ENCODE measurements at regions of chr20 and their contacts with region 1.

Region 1: DNA sequence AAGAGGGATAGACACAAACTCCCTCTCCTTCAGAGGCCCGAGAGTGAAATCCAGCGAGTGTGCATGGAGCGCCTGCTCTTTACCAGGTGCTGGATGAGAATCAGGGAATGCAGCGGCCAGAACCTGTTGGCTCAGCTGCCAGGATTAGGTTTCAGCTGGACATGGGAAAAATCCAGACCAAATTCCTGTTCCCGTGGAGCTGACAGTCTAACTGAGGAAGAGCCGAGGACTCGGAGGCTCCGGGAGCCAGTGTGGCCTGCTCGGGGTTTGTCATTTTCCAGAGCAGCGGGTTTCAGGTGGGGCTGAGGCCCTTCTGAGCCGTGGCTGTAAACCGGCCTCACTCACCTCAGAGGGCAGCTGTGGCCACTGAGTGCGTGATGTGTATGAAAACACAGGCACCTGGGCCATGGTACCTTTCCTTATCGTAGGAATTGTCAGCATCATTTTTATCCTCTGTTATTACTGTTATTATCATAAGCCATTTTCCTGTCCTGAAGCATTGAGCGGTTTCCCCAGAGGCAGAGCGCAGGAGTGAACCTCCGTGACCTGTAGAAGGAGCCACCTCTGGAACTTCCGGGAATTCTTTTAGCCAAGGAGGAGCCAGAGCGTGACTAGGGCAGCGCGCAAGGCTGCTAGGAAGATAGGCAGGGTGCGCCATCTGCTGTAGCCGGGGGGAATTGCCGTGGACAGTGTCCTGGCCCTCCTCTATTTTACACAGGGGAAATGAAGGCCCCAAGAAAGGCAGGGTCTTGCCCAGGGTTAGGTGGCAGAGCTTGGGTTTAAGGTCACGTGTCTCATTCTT is 27.3 kb downstream of the PKIG start:
- DNase-seq: peak; percentile 94
- ATAC-seq: peak; percentile 97
- H3K4me3 ChIP-seq: no peak overlapping the region
- H3K27ac ChIP-seq: peak overlapping the region; percentile 65
- H3K4me1 ChIP-seq: peaks cover 8% of the 10 kb centered on the region
- H3K27me3 ChIP-seq: no peaks in the 10 kb centered on the region
- CTCF ChIP-seq: peak; percentile 98

Region 2: GRCh38 chr20:44217342-44218092 is 392.2 kb before region 1 on chr20:
- CTCF ChIA-PET with region 1: no interaction called
- POLR2A ChIA-PET with region 1: no interaction called
- intact Hi-C with region 1: loop called (anchors 2 kb)
- DNase-seq: peak; percentile 91
- ATAC-seq: peak; percentile 73
- H3K4me3 ChIP-seq: no peak overlapping the region
- H3K27ac ChIP-seq: no peak overlapping the region
- H3K4me1 ChIP-seq: peaks cover 14% of the 10 kb centered on the region; the same call in 1 of the 2 replicates
- H3K27me3 ChIP-seq: no peaks in the 10 kb centered on the region
- CTCF ChIP-seq: peak; percentile 99

Region 3: GRCh38 chr20:44475694-44476560 is 133.8 kb before region 1 on chr20 and contains the start of gene TTPAL:
- CTCF ChIA-PET with region 1: interaction called, 4 read pairs
- POLR2A ChIA-PET with region 1: no interaction called
- intact Hi-C with region 1: loop called (anchors 1 kb)
- DNase-seq: peak; percentile 97
- ATAC-seq: peak; percentile 92
- H3K4me3 ChIP-seq: peak within 1 kb of the TSS; percentile 77
- H3K27ac ChIP-seq: peak within 1 kb of the TSS; percentile 48
- H3K4me1 ChIP-seq: peaks cover 20% of the 10 kb centered on the region
- H3K27me3 ChIP-seq: no peaks in the 10 kb centered on the region
- CTCF ChIP-seq: peak; percentile 41; the same call in 1 of the 2 replicates
- total RNA-seq, gene TTPAL: 14.0 and 17.9 TPM in 2 replicates

Region 4: DNA sequence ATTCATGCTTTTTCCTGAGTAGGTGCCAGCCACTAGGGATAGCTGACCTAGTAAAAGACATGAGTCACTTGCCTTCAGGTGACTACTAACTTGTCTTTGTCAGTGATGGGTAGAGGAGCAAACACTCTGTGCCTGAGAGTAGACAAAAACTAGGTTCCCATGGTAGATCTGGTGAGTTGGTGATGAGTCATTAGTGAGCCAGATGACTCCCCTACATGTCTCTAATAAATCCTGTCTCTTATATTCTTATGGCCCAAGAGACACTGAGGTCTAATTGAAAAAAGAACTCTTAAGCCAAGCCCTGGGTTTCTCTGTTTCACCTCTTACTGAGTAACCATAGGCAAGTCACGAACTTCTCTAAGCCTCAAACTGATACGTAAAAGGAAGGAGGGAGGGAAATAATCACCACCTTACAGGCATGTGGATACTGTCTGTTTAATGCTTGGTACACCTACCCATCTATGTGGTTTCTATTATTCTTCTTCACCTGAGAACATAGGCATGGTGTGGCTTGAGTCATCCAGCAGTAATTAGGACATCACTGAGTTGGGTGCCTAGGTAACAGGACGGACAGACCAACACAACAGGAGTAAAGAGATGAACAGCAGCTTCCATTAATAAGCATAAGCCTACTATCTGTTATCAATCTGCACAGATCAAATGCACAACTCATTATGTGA is 113.8 kb before region 1 on chr20:
- CTCF ChIA-PET with region 1: no interaction called
- POLR2A ChIA-PET with region 1: no interaction called
- intact Hi-C with region 1: loop called (anchors 1 kb)
- DNase-seq: peak; percentile 99
- ATAC-seq: peak; percentile 82
- H3K4me3 ChIP-seq: peak overlapping the region; percentile 20; the same call in 1 of the 2 replicates
- H3K27ac ChIP-seq: peak overlapping the region; percentile 96
- H3K4me1 ChIP-seq: peaks cover 50% of the 10 kb centered on the region
- H3K27me3 ChIP-seq: no peaks in the 10 kb centered on the region
- CTCF ChIP-seq: no peak

Region 5: GRCh38 chr20:44532259-44532980 is 77.3 kb before region 1 on chr20:
- CTCF ChIA-PET with region 1: no interaction called
- POLR2A ChIA-PET with region 1: no interaction called
- intact Hi-C with region 1: loop called (anchors 2 kb)
- DNase-seq: peak; percentile 25
- ATAC-seq: peak; percentile 14
- H3K4me3 ChIP-seq: peak overlapping the region; percentile 75
- H3K27ac ChIP-seq: peak overlapping the region; percentile 41
- H3K4me1 ChIP-seq: peaks cover 27% of the 10 kb centered on the region
- H3K27me3 ChIP-seq: no peaks in the 10 kb centered on the region
- CTCF ChIP-seq: no peak

Region 6: DNA sequence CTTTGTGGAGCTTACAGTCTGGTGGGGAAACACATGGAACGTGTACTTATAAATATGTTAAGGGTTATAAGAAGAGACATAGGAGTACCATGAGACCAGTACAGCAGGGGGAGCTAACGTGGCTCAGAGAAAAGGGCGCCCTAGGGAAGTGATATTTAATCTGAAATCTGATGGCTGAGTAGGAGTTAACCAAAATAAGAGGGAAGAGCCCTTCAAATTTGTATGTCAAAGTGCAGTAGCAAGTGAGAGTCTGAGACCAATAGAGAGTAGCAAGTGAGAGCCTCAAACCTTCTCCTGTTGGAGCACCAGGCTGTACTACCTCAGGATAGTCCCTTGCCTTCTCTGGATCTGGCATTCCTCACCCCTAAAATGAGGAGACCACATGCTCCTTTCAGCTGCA is 33.4 kb before region 1 on chr20:
- CTCF ChIA-PET with region 1: no interaction called
- POLR2A ChIA-PET with region 1: no interaction called
- intact Hi-C with region 1: loop called (anchors 2 kb)
- DNase-seq: peak; percentile 65
- ATAC-seq: peak; percentile 12; the same call in 1 of the 2 replicates
- H3K4me3 ChIP-seq: no peak overlapping the region
- H3K27ac ChIP-seq: peak overlapping the region; percentile 84
- H3K4me1 ChIP-seq: peaks cover 55% of the 10 kb centered on the region
- H3K27me3 ChIP-seq: no peaks in the 10 kb centered on the region
- CTCF ChIP-seq: peak; percentile 70

Measured in PC-3 (cell line).